ENCODE measurements at regions of chr13 and their contacts with region 1.

Region 1: DNA sequence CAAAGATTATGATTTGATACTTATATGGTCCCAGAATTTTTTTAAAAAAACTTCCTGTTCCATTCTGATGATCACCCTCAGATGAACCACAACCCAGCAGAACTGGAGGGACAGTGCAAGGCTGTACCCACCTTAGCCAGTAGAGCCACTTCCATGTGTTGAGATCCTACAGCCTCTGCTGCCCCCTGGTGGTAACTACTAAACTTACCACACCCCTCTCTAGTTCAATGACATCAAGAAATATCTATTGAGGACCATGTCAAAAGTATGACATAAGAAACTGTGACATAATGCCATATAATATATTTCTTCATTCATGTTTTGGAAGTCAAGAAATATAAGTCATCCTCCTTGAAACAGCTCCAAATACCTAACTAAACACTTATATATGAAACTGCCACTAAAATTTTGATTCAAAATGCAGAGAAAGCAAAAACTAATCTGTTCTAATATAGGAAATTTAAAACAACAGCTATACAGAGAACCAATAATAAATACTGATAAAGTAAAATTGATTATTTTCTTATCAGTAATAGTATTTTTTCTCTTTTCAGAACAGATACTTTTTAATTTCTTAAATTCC is 412.6 kb downstream of the KCTD12 start:
- DNase-seq: peak; percentile 75
- ATAC-seq: peak; percentile 100
- H3K4me3 ChIP-seq: no peak overlapping the region
- H3K27ac ChIP-seq: no peak overlapping the region
- H3K4me1 ChIP-seq: no peaks in the 10 kb centered on the region
- H3K27me3 ChIP-seq: no peaks in the 10 kb centered on the region
- CTCF ChIP-seq: peak; percentile 68 to 80 (median 69)
- POLR2A ChIP-seq: no peak
- RAD21 ChIP-seq: peak; percentile 82

Region 2: GRCh38 chr13:75566658-75567057 is 907.0 kb before region 1 on chr13:
- CTCF ChIA-PET with region 1: no interaction called
- POLR2A ChIA-PET with region 1: no interaction called
- RAD21 ChIA-PET with region 1: no interaction called
- intact Hi-C with region 1: loop called (anchors 5 kb)
- DNase-seq: no peak
- ATAC-seq: no peak
- H3K4me3 ChIP-seq: no peak overlapping the region
- H3K27ac ChIP-seq: no peak overlapping the region
- H3K4me1 ChIP-seq: no peaks in the 10 kb centered on the region
- H3K27me3 ChIP-seq: no peaks in the 10 kb centered on the region
- CTCF ChIP-seq: peak; percentile 18 to 48 (median 31); a peak in 4 of 6 replicates
- POLR2A ChIP-seq: no peak
- RAD21 ChIP-seq: peak; percentile 47

Region 3: DNA sequence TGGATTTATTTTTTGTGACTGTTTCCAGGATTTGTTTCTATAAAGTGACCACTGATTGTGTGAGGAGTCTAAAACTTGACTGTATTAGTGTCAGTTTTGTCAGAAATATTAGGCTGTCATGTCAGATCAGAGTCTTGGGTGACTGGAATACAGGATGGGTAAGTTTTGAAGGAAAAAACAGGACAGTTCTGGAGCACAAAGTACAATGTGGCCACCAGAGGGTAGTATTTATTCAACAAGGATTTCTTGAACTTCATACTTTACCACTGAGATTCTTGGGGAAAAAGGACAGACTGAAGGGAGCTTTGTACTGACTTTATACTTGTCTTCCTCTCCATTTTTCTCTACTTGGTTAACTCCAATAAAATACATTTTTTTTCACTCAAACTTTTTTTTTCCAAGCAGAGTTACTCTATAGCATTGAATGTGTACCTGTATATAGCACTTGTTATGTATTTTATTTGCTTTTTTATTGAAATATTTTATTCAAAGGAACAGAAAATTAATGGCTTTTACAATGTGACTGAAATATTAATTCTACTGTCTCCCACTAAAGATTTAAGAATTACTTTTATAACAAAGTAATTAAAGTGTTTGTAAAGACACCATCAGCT is 786.4 kb before region 1 on chr13:
- CTCF ChIA-PET with region 1: no interaction called
- POLR2A ChIA-PET with region 1: no interaction called
- RAD21 ChIA-PET with region 1: no interaction called
- intact Hi-C with region 1: loop called (anchors 2 kb)
- DNase-seq: peak; percentile 24
- ATAC-seq: peak; percentile 83
- H3K4me3 ChIP-seq: no peak overlapping the region
- H3K27ac ChIP-seq: no peak overlapping the region
- H3K4me1 ChIP-seq: peaks cover 8 to 11% of the 10 kb centered on the region in 2 experiments
- H3K27me3 ChIP-seq: no peaks in the 10 kb centered on the region
- CTCF ChIP-seq: peak; percentile 29 to 70 (median 58); a peak in 5 of 6 replicates
- POLR2A ChIP-seq: no peak
- RAD21 ChIP-seq: peak; percentile 60

Region 4: GRCh38 chr13:75876360-75877050 is 597.1 kb before region 1 on chr13:
- CTCF ChIA-PET with region 1: interaction called, 3 read pairs
- POLR2A ChIA-PET with region 1: no interaction called
- RAD21 ChIA-PET with region 1: no interaction called
- intact Hi-C with region 1: loop called (anchors 1 kb)
- DNase-seq: peak; percentile 60
- ATAC-seq: peak; percentile 98
- H3K4me3 ChIP-seq: no peak overlapping the region
- H3K27ac ChIP-seq: no peak overlapping the region
- H3K4me1 ChIP-seq: peaks cover 0 to 4% of the 10 kb centered on the region in 2 experiments; a peak in 1 of 4 replicates
- H3K27me3 ChIP-seq: no peaks in the 10 kb centered on the region
- CTCF ChIP-seq: peak; percentile 81 to 86 (median 85)
- POLR2A ChIP-seq: no peak
- RAD21 ChIP-seq: peak; percentile 90

Region 5: DNA sequence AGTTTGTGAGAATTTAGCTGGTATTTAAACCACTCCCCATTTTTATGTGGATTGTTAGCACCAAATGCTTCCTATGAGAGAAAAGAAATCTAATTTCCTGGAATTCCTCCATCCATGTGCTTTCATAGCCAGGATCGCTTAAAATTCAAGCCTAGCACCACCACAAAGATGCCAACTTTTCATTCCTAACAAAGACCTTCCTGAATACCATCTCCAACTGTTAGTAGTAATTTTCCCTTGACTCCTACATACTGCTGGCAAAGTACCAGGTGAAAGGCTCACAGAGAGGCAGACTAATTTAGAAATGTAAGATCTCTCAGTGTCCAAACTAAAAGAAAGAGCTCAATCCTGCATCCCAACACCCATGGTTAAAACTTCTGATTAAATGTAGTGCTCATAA is 26.2 kb after region 1 on chr13:
- CTCF ChIA-PET with region 1: no interaction called
- POLR2A ChIA-PET with region 1: no interaction called
- RAD21 ChIA-PET with region 1: no interaction called
- intact Hi-C with region 1: no loop called
- DNase-seq: no peak
- ATAC-seq: no peak
- H3K4me3 ChIP-seq: no peak overlapping the region
- H3K27ac ChIP-seq: no peak overlapping the region
- H3K4me1 ChIP-seq: no peaks in the 10 kb centered on the region
- H3K27me3 ChIP-seq: no peaks in the 10 kb centered on the region
- CTCF ChIP-seq: no peak
- POLR2A ChIP-seq: no peak
- RAD21 ChIP-seq: no peak

Region 6: DNA sequence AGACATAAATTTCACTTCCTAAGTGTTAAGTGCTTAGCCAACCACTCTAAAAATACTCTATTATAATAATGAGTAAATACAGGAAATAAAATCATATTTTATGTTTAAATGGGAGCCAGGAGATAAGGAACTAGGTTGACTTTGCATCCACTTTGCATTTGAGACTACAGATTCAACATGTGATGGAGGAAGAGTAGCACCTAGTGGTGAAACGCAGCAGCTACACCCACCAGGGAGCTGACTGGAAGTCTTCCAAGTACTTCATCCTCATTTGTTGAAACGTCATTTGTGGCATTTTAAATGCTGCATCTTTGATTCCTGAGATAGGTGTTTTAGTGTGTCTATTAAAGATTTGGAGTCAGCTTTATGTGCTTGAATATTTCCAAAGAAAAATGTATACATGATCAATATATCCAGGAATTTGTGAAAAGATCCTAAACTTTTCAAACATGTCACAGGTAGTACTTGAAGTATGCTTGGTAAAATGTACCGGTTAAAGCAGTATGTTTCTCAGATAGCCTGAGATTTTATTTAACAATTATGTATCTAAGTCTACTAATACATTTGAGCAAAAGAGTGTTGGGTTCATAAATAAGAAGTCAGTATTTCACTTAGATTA is 430.0 kb after region 1 on chr13:
- CTCF ChIA-PET with region 1: no interaction called
- POLR2A ChIA-PET with region 1: no interaction called
- RAD21 ChIA-PET with region 1: no interaction called
- intact Hi-C with region 1: loop called (anchors 1 kb)
- DNase-seq: peak; percentile 69
- ATAC-seq: peak; percentile 84
- H3K4me3 ChIP-seq: no peak overlapping the region
- H3K27ac ChIP-seq: no peak overlapping the region
- H3K4me1 ChIP-seq: no peaks in the 10 kb centered on the region
- H3K27me3 ChIP-seq: peaks cover 20% of the 10 kb centered on the region
- CTCF ChIP-seq: peak; percentile 66 to 98 (median 96)
- POLR2A ChIP-seq: no peak
- RAD21 ChIP-seq: peak; percentile 87

Measured in HCT116 (cell line).